Posterior cingulate gyrus (tissue), 11 donors: ENCODE measurements at regions of chr1 and their contacts with region 1.

Region 1: GRCh38 chr1:27603681-27604578 is at the start of gene AHDC1:
- DNase-seq: peak; percentile 80 to 99 (median 90)

Region 2: DNA sequence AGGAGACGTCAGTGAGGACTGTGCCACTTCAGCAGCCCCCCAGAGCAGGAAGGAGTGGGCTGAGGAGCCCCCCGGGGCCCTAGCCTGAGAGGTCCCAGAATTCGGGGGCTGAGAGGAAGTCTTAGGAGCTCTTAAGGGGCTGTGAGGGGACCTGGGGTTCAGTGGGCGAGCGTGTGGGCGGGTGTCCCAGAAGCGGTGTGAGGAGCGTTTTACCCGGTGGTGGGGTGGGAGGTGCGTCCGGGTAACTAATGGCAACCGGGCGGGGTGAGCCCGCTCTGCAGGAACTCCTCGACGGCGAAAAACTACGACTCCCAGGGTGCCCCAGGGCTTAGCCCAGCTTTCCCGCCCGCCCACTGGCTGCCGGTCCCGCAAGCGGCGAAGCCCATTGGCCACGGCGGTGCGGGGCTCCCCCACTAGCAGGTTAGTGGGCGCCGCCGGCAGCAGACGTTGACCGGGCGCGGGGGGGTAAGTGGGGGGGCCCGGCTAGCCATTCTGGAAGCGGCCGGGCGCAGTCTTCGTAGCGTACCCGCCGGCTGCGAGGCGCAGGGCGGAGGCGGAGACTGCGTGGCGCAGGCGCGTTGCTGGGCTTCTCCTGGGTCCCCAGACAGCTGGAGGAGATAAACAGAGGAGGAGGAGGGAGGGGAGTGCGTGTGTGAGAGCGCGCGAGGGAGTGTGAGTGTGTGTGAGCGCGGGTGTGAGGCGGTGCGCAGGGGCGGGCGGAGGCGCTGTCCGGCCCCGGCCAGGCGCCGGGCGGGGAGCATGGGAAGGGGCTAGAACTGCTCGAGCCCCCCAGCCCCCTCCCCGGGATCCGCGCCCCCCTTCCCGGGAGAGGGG is 369.7 kb before region 1 on chr1 and contains the start of gene WDTC1:
- intact Hi-C with region 1: loop called (anchors 5 kb)
- DNase-seq: peak; percentile 94 to 100 (median 99)

Region 3: GRCh38 chr1:27284425-27285273 is 319.3 kb before region 1 on chr1:
- intact Hi-C with region 1: no loop called
- DNase-seq: peak; percentile 53 to 95 (median 86)

Region 4: GRCh38 chr1:27300341-27301051 is 303.4 kb before region 1 on chr1:
- intact Hi-C with region 1: loop called (anchors 2 kb)
- DNase-seq: peak; percentile 77 to 98 (median 82)

Region 5: GRCh38 chr1:27402349-27402754 is 201.6 kb before region 1 on chr1:
- intact Hi-C with region 1: loop called (anchors 5 kb)
- DNase-seq: peak; percentile 44 to 95 (median 71)

Region 6: DNA sequence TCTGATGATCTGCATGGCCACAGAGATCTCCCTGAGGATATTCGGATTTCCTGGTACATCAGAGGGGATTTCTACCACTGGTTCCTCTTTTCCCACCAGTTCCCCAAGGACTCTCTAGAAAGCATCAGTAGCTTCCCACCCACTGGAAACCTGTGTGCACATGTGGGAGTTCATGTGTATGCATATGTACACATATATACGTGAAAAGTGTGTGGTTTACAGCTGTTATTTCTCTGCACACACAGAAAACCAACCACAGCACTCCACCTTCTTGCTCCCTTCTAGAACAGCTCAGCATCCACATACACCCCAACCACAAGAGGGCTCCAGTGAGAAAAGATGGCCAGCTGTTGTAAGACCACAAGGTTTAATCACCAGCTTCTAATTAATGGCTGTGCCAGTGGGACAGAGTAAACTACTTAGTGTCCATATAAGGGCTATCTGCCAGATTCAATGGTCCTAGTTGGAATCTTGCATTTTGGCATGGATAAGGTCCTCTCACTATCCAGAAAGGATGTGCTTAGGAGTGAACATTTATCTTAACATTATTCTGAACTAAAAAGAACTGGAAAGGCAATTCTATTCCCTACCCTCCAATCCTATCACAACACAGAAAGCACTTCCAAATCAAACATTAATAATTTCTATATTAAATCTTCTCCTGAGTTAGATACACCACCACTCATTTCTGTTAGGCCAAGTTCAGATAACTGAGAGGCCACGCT is 187.4 kb before region 1 on chr1:
- intact Hi-C with region 1: loop called (anchors 5 kb)
- DNase-seq: peak in 2 of 10 donors; percentile 35 to 38

Region 7: GRCh38 chr1:27556781-27557595 is 46.9 kb before region 1 on chr1:
- intact Hi-C with region 1: loop called (anchors 1 kb)
- DNase-seq: peak in 9 of 10 donors; percentile 68 to 94 (median 72)